MCF 10A (cell line): ENCODE measurements at regions of chr1 and their contacts with region 1.

Region 1: GRCh38 chr1:211928993-211929637 is 98.6 kb upstream of the LPGAT1 start:
- DNase-seq: peak; percentile 96
- H3K4me3 Mint-ChIP-seq: peak overlapping the region; percentile 62
- H3K27ac Mint-ChIP-seq: peak overlapping the region; percentile 95
- H3K4me1 Mint-ChIP-seq: peaks cover 21% of the 10 kb centered on the region
- H3K27me3 Mint-ChIP-seq: no peaks in the 10 kb centered on the region
- CTCF ChIP-seq: no peak

Region 2: GRCh38 chr1:210222340-210223006 is 1706.6 kb before region 1 on chr1:
- CTCF ChIA-PET with region 1: no interaction called
- POLR2A ChIA-PET with region 1: no interaction called
- intact Hi-C with region 1: no loop called
- DNase-seq: peak; percentile 65
- H3K4me3 Mint-ChIP-seq: no peak overlapping the region
- H3K27ac Mint-ChIP-seq: no peak overlapping the region
- H3K4me1 Mint-ChIP-seq: peaks cover 6% of the 10 kb centered on the region
- H3K27me3 Mint-ChIP-seq: peaks cover 25% of the 10 kb centered on the region
- CTCF ChIP-seq: no peak

Region 3: GRCh38 chr1:211813590-211813989 is 115.5 kb before region 1 on chr1:
- CTCF ChIA-PET with region 1: interaction called, 4 read pairs
- POLR2A ChIA-PET with region 1: interaction called, 10 read pairs
- intact Hi-C with region 1: no loop called
- DNase-seq: peak; percentile 93
- H3K4me3 Mint-ChIP-seq: no peak overlapping the region
- H3K27ac Mint-ChIP-seq: no peak overlapping the region
- H3K4me1 Mint-ChIP-seq: peaks cover 7% of the 10 kb centered on the region
- H3K27me3 Mint-ChIP-seq: no peaks in the 10 kb centered on the region
- CTCF ChIP-seq: no peak